Naive thymus-derived CD4-positive, alpha-beta T cell (primary cell): ENCODE measurements at regions of chr15 and their contacts with region 1.

Region 1: GRCh38 chr15:45587095-45587860 is at the start of gene BLOC1S6:
- DNase-seq: peak; percentile 81 to 91 (median 87)
- ATAC-seq: peak; percentile 87
- H3K4me3 ChIP-seq: peak within 1 kb of the TSS; percentile 87
- H3K4me3 Mint-ChIP-seq: peak within 1 kb of the TSS; percentile 96 to 100 (median 98)
- H3K27ac ChIP-seq: peak within 1 kb of the TSS; percentile 97
- H3K27ac Mint-ChIP-seq: peak within 1 kb of the TSS; percentile 100
- H3K4me1 ChIP-seq: peaks cover 25 to 26% of the 10 kb centered on the region in 2 donors
- H3K4me1 Mint-ChIP-seq: peaks cover 27 to 55% (median 38%) of the 10 kb centered on the region in 7 donors
- H3K27me3 ChIP-seq: no peaks in the 10 kb centered on the region
- H3K27me3 Mint-ChIP-seq: no peaks in the 10 kb centered on the region
- total RNA-seq, gene BLOC1S6: 34.4 to 63.9 (median 50.9) TPM

Region 2: DNA sequence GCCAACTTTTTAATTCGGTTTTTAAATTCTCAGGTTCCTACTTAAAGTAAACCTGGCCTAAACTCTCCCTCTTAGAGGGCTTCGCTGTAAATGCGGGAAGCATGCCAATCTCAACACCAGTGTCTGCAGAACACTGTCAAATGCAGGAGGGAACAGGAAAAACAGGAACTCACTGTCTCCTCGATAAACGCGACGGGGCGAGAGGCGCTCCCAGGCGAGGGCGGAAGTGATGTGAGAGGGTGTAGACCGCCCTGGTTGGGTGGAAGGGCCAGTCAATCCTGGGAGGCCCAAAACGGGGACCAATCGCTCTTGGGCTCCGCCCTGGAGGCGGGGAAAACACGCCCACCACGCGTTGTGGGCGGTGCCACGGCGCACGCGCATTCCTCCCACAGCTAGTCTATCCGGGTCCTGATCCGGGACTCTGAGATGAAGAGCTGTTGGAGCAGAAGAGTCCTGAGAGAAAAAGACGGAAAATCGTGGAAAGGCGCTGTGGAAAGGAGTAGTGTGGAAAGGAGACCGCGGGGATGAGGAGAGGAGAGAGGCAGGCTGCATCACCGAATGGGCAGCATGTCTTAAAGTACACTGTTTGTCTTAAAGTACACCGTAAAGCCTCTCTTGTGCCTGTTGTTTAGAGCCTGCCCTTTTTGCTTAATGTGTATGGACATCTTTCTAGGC is 308.1 kb before region 1 on chr15:
- CTCF ChIA-PET with region 1: no interaction called
- POLR2A ChIA-PET with region 1: interaction called, 4 read pairs
- intact Hi-C with region 1: loop called (anchors 1 kb)
- DNase-seq: peak; percentile 93 to 99 (median 98)
- ATAC-seq: peak; percentile 100
- H3K4me3 ChIP-seq: peak overlapping the region; percentile 90
- H3K4me3 Mint-ChIP-seq: peak overlapping the region; percentile 90 to 99 (median 95)
- H3K27ac ChIP-seq: peak overlapping the region; percentile 84
- H3K27ac Mint-ChIP-seq: peak overlapping the region; percentile 84 to 99 (median 93)
- H3K4me1 ChIP-seq: peaks cover 9 to 12% of the 10 kb centered on the region in 2 donors
- H3K4me1 Mint-ChIP-seq: peaks cover 10 to 34% (median 23%) of the 10 kb centered on the region in 7 donors
- H3K27me3 ChIP-seq: no peaks in the 10 kb centered on the region
- H3K27me3 Mint-ChIP-seq: peaks cover 0 to 1% (median 0%) of the 10 kb centered on the region in 5 donors

Region 3: GRCh38 chr15:45499426-45499825 is 87.9 kb before region 1 on chr15:
- CTCF ChIA-PET with region 1: no interaction called
- POLR2A ChIA-PET with region 1: no interaction called
- intact Hi-C with region 1: no loop called
- DNase-seq: no peak
- ATAC-seq: no peak
- H3K4me3 ChIP-seq: no peak overlapping the region
- H3K4me3 Mint-ChIP-seq: no peak overlapping the region
- H3K27ac ChIP-seq: no peak overlapping the region
- H3K27ac Mint-ChIP-seq: no peak overlapping the region
- H3K4me1 ChIP-seq: no peaks in the 10 kb centered on the region
- H3K4me1 Mint-ChIP-seq: no peaks in the 10 kb centered on the region
- H3K27me3 ChIP-seq: no peaks in the 10 kb centered on the region
- H3K27me3 Mint-ChIP-seq: no peaks in the 10 kb centered on the region

Region 4: GRCh38 chr15:45522328-45523160 is 64.7 kb before region 1 on chr15 and contains the start of gene SLC30A4:
- CTCF ChIA-PET with region 1: no interaction called
- POLR2A ChIA-PET with region 1: interaction called, 6 read pairs
- intact Hi-C with region 1: loop called (anchors 1 kb)
- DNase-seq: peak; percentile 49 to 75 (median 66)
- ATAC-seq: peak; percentile 92
- H3K4me3 ChIP-seq: peak within 1 kb of the TSS; percentile 66
- H3K4me3 Mint-ChIP-seq: peak within 1 kb of the TSS; percentile 93 to 98 (median 94)
- H3K27ac ChIP-seq: peak within 1 kb of the TSS; percentile 64
- H3K27ac Mint-ChIP-seq: peak within 1 kb of the TSS; percentile 79 to 90 (median 85)
- H3K4me1 ChIP-seq: peaks cover 0 to 8% of the 10 kb centered on the region in 2 donors
- H3K4me1 Mint-ChIP-seq: peaks cover 23 to 43% (median 33%) of the 10 kb centered on the region in 7 donors
- H3K27me3 ChIP-seq: no peaks in the 10 kb centered on the region
- H3K27me3 Mint-ChIP-seq: peaks cover 0 to 40% (median 0%) of the 10 kb centered on the region in 5 donors
- total RNA-seq, gene SLC30A4: 2.6 to 4.4 (median 3.0) TPM

Region 5: GRCh38 chr15:45634442-45635190 is 47.3 kb after region 1 on chr15 and contains the start of gene SQOR:
- CTCF ChIA-PET with region 1: no interaction called
- POLR2A ChIA-PET with region 1: interaction called, 19 read pairs
- intact Hi-C with region 1: loop called (anchors 1 kb)
- DNase-seq: peak; percentile 46 to 78 (median 58)
- ATAC-seq: peak; percentile 72
- H3K4me3 ChIP-seq: peak within 1 kb of the TSS; percentile 84
- H3K4me3 Mint-ChIP-seq: peak within 1 kb of the TSS; percentile 91 to 98 (median 96)
- H3K27ac ChIP-seq: peak within 1 kb of the TSS; percentile 69
- H3K27ac Mint-ChIP-seq: peak within 1 kb of the TSS; percentile 84 to 96 (median 91)
- H3K4me1 ChIP-seq: peaks cover 24 to 27% of the 10 kb centered on the region in 2 donors
- H3K4me1 Mint-ChIP-seq: peaks cover 24 to 46% (median 42%) of the 10 kb centered on the region in 7 donors
- H3K27me3 ChIP-seq: no peaks in the 10 kb centered on the region
- H3K27me3 Mint-ChIP-seq: peaks cover 0 to 13% (median 0%) of the 10 kb centered on the region in 5 donors
- total RNA-seq, gene SQOR: 20.6 to 115 (median 32.6) TPM